Caco-2 (cell line): ENCODE measurements at regions of chr10 and their contacts with region 1.

Region 1: GRCh38 chr10:75165684-75166622 is 44.6 kb upstream of the VDAC2 start:
- DNase-seq: no peak
- H3K4me3 ChIP-seq: no peak overlapping the region
- H3K4me3 Mint-ChIP-seq: no peak overlapping the region
- H3K27ac Mint-ChIP-seq: no peak overlapping the region
- H3K4me1 ChIP-seq: peaks cover 17% of the 10 kb centered on the region
- H3K4me1 Mint-ChIP-seq: peaks cover 14% of the 10 kb centered on the region
- H3K27me3 ChIP-seq: no peaks in the 10 kb centered on the region
- H3K27me3 Mint-ChIP-seq: no peaks in the 10 kb centered on the region
- CTCF ChIP-seq: no peak

Region 2: DNA sequence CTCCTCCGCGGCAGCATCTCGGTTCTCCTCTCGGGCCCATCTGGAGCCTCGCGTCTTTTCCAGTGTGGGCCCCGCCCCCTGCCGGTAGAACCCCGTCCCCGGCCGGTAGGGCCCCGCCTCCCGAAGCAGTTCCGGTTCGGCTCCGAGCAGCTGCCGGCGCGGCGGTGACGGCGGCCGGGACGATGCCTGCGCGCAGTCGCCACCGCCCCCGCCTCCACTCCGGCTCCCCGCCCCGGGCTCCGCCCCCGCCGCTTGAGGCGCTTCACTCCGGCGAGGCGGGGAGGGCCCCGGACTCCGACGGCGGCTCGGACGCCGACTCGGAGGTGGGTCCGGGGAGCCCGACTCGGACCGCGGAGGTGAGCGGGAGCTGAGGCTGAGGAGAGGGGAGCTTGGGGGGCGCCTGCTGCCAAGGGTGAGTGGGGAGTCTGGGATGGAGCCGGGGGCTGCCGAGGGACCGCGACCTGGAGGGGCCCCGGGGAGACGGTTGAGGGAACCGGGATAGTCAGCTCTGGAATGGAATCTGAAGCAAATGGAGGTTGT is 54.5 kb before region 1 on chr10 and contains the start of gene SAMD8:
- CTCF ChIA-PET with region 1: no interaction called
- POLR2A ChIA-PET with region 1: no interaction called
- intact Hi-C with region 1: loop called (anchors 5 kb)
- DNase-seq: peak; percentile 99
- H3K4me3 ChIP-seq: peak within 1 kb of the TSS; percentile 75
- H3K4me3 Mint-ChIP-seq: peak within 1 kb of the TSS; percentile 88
- H3K27ac Mint-ChIP-seq: peak within 1 kb of the TSS; percentile 92
- H3K4me1 ChIP-seq: peaks cover 31% of the 10 kb centered on the region
- H3K4me1 Mint-ChIP-seq: peaks cover 31% of the 10 kb centered on the region
- H3K27me3 ChIP-seq: no peaks in the 10 kb centered on the region
- H3K27me3 Mint-ChIP-seq: no peaks in the 10 kb centered on the region
- CTCF ChIP-seq: peak in 1 of 2 experiments; percentile 53
- total RNA-seq, gene SAMD8: 25.2 and 26.9 TPM in 2 replicates

Region 3: DNA sequence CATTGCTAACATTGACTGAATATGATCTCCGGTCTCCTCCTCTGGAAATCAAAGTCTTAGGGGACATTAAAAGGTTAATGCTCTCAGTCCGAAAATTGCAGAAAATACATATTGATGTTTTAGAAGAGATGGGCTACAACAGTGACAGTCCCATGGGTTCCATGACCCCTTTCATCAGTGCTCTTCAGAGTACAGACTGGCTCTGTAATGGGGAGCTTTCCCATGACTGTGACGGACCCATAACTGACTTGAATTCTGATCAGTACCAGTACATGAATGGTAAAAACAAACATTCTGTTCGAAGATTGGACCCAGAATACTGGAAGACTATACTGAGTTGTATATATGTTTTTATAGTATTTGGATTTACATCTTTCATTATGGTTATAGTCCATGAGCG is 15.3 kb before region 1 on chr10:
- CTCF ChIA-PET with region 1: no interaction called
- POLR2A ChIA-PET with region 1: no interaction called
- intact Hi-C with region 1: no loop called
- DNase-seq: no peak
- H3K4me3 ChIP-seq: no peak overlapping the region
- H3K4me3 Mint-ChIP-seq: no peak overlapping the region
- H3K27ac Mint-ChIP-seq: no peak overlapping the region
- H3K4me1 ChIP-seq: no peaks in the 10 kb centered on the region
- H3K4me1 Mint-ChIP-seq: peaks cover 2% of the 10 kb centered on the region
- H3K27me3 ChIP-seq: no peaks in the 10 kb centered on the region
- H3K27me3 Mint-ChIP-seq: no peaks in the 10 kb centered on the region
- CTCF ChIP-seq: no peak